MCF 10A (cell line): ENCODE measurements at regions of chr5 and their contacts with region 1.

Region 1: DNA sequence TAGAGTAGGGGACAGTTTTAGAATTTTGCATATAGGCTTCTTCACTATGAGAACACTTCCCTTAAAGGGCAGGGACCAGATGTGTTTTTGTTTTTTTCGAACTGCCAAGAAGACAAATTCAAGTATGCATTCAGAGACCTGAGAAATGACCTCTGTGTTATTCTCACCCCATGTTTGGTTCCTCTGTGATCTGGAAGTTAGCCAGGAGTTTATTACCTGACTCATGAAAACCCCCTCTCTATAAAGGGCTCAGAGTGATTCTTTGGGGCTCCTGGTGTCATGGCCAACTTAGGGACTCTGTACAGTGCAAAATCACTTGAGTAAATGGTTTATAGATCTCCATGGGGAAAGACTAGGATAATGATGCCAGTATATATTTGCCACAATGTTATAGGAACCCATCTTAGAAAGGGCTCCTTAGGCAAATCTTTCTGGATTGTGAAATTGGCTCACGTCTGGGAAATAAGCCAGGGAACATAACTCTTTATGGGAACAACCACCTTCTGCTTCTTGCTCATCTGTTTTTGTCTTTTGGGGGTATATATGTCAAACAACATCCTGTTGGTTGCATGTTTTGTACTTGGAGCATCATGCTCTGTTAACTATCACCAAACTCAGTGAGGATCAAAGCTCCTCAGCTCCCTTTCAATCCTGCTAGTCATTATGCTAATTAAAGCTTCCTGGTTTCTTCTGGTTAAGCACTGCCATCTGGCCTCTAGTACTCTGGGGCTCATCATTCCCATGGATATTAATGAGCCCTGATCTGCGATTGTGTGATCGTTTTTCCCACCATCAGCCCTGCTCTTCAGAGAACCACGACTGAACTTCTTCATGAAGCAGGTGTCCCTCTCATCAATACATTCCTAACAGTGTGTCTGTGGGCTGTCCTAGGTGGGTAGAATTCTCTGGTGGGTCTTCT is 173.4 kb upstream of the CDH12 start:
- DNase-seq: peak; percentile 93
- H3K4me3 Mint-ChIP-seq: no peak overlapping the region
- H3K27ac Mint-ChIP-seq: peak overlapping the region; percentile 78
- H3K4me1 Mint-ChIP-seq: peaks cover 19% of the 10 kb centered on the region
- H3K27me3 Mint-ChIP-seq: no peaks in the 10 kb centered on the region
- CTCF ChIP-seq: no peak

Region 2: GRCh38 chr5:22908129-22908528 is 118.4 kb before region 1 on chr5:
- CTCF ChIA-PET with region 1: interaction called, 4 read pairs
- POLR2A ChIA-PET with region 1: interaction called, 11 read pairs
- intact Hi-C with region 1: no loop called
- DNase-seq: peak; percentile 88
- H3K4me3 Mint-ChIP-seq: peak overlapping the region; percentile 7
- H3K27ac Mint-ChIP-seq: peak overlapping the region; percentile 85
- H3K4me1 Mint-ChIP-seq: peaks cover 12% of the 10 kb centered on the region
- H3K27me3 Mint-ChIP-seq: no peaks in the 10 kb centered on the region
- CTCF ChIP-seq: no peak

Region 3: DNA sequence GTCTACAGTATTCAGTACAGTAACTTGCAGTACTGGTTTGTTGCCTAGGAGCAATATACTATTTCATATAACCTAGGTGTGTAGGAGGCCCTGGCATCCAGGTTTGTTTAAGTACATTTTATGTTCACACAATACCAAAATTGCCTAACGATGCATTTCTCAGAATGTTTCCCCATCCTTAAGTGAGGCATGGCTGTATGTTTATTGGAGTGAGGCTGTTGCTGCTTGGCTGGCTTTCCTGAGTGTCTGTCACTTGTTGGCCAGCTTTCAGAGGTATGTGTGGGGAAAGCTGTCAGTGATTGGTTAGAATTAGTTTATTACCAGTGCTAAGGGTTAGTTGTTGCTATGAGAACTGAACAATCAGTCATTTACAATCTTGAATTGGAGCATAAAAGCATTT is 19.3 kb before region 1 on chr5:
- CTCF ChIA-PET with region 1: interaction called, 7 read pairs
- POLR2A ChIA-PET with region 1: interaction called, 69 read pairs
- intact Hi-C with region 1: no loop called
- DNase-seq: peak; percentile 66
- H3K4me3 Mint-ChIP-seq: no peak overlapping the region
- H3K27ac Mint-ChIP-seq: no peak overlapping the region
- H3K4me1 Mint-ChIP-seq: peaks cover 9% of the 10 kb centered on the region
- H3K27me3 Mint-ChIP-seq: no peaks in the 10 kb centered on the region
- CTCF ChIP-seq: no peak

Region 4: DNA sequence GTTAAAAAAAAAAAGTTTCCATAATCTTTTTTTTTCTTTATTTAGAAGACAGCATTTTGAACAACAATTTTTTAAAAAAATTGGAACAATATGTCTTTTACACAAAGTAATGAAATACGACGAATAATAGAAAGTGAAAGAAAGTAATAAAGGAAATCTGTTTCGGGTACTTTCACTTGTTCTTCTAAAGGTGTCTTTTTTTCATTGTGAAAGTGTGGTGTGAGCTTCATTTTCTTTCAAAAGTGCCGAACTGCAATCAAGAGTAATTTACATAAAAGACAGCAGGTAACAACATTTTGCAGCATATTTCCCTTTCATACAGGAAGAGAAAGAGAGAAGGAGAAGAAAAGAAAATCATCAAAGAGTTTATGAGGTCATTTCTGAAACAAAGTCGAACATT is 13.7 kb before region 1 on chr5:
- CTCF ChIA-PET with region 1: interaction called, 5 read pairs
- POLR2A ChIA-PET with region 1: interaction called, 69 read pairs
- intact Hi-C with region 1: no loop called
- DNase-seq: peak; percentile 22
- H3K4me3 Mint-ChIP-seq: peak overlapping the region; percentile 78
- H3K27ac Mint-ChIP-seq: peak overlapping the region; percentile 95
- H3K4me1 Mint-ChIP-seq: peaks cover 9% of the 10 kb centered on the region
- H3K27me3 Mint-ChIP-seq: no peaks in the 10 kb centered on the region
- CTCF ChIP-seq: no peak